ENCODE measurements at regions of chr1 and their contacts with region 1.

Region 1: DNA sequence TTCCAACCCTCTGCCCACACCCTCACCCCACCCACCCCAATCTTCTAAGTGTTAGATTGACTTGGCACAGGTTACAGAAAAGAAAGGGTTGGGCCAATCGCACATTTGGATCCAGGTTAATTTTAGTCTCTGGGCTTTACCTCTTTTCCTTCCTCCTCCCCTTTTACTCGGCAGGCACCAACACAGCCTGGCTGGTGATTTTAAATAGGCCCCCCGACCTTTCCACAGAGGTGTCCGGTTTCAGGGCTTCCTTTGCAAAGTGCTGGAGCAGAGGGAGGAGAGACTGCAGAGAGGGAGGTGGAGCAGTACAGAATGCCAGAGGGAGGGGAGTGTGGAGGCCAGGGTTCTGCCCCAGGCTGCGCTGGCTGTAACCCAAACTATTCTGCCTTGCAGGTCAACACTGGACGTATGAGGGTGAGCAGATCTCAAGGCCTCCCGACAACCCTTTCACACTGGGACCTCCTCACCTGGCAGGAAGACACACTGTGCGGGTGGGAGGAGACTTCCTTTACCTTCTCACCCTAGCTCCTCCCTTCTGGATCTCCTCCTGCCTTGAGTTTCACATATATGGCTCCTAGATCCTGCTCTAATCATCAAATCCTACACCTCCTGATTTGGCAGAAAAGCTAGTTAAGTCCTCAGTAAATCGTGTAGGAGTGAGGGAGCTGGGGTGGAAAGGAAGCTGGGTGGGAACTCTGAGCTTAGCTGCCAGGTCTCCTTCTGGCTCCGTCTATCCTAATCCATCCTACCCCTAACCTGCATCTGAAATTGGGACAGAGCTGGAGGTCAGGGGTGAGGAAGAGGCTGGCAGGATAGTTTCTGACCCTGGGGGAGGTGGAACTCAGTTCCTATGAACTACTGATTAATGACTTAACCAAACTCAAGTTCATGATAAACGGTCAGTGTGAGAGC is 2.4 kb downstream of the CA14 start:
- DNase-seq: no peak
- H3K4me3 ChIP-seq: no peak overlapping the region; the same call in 1 of the 2 replicates
- H3K27ac ChIP-seq: no peak overlapping the region
- H3K27me3 ChIP-seq: peaks cover 5% of the 10 kb centered on the region
- CTCF ChIP-seq: no peak

Region 2: GRCh38 chr1:150281837-150282653 is 22.0 kb after region 1 on chr1 and contains the start of gene CIART:
- CTCF ChIA-PET with region 1: interaction called, 165 read pairs
- POLR2A ChIA-PET with region 1: interaction called, 5 read pairs
- DNase-seq: peak; percentile 98
- H3K4me3 ChIP-seq: peak within 1 kb of the TSS; percentile 77
- H3K27ac ChIP-seq: peak within 1 kb of the TSS; percentile 77
- H3K27me3 ChIP-seq: no peaks in the 10 kb centered on the region
- CTCF ChIP-seq: no peak
- polyA plus RNA-seq, gene CIART: 8.6 and 9.4 TPM in 2 replicates

Region 3: DNA sequence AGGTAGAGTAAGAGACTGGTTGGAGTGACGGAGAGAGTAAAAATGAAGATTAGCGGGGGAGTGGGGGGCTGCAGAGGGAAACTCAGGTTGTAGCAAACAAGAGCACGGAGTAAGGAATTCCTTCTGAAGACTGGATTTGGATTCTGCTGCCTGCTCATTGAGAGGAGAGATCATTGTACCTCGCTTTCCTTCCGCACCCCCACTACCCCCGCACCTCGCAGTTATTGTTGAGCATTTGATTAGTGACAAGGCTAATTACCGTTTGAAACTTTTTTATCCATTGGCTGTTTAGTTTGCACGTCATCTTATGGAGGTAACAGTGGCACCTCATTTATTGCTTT is 61.8 kb after region 1 on chr1:
- CTCF ChIA-PET with region 1: interaction called, 12 read pairs
- POLR2A ChIA-PET with region 1: interaction called, 4 read pairs
- DNase-seq: no peak
- H3K4me3 ChIP-seq: peak overlapping the region; percentile 92
- H3K27ac ChIP-seq: peak overlapping the region; percentile 61
- H3K27me3 ChIP-seq: no peaks in the 10 kb centered on the region
- CTCF ChIP-seq: no peak

Region 4: GRCh38 chr1:150429805-150430204 is 169.8 kb after region 1 on chr1:
- CTCF ChIA-PET with region 1: interaction called, 10 read pairs
- POLR2A ChIA-PET with region 1: no interaction called
- DNase-seq: no peak
- H3K4me3 ChIP-seq: no peak overlapping the region
- H3K27ac ChIP-seq: no peak overlapping the region
- H3K27me3 ChIP-seq: no peaks in the 10 kb centered on the region
- CTCF ChIP-seq: peak; percentile 30

Measured in AG04450 (cell line).